Ovary (tissue), 10 donors: ENCODE measurements at regions of chr18 and their contacts with region 1.

Region 1: DNA sequence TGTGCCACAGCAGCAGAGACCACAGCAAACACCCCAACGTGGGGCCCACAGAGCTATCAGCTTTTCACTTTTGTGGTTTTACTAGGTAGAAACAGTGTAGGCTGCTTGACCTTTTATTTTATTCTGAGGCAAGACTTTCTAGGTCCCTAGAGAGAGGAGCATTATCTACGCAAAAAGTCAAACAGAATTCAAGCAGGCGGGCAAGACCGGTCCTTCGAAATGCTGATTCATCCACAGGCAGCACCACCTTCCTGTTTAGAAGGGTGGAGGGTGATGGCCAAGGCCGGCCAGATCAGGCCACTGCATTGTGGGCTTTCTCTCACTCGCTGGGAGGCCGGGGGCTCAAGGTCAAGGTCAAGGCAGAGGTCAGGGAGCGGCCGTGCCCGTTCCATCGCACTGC is 573.0 kb downstream of the GALR1 start:
- DNase-seq: no peak
- H3K4me3 ChIP-seq: no peak overlapping the region
- H3K27ac ChIP-seq: no peak overlapping the region
- H3K4me1 ChIP-seq: no peaks in the 10 kb centered on the region
- H3K27me3 ChIP-seq: no peaks in the 10 kb centered on the region
- CTCF ChIP-seq: no peak
- EP300 ChIP-seq: no peak
- POLR2A ChIP-seq: no peak

Region 2: GRCh38 chr18:77870199-77870598 is 47.6 kb after region 1 on chr18:
- intact Hi-C with region 1: loop called in 1 of 4 experiments (anchors 5 kb)
- DNase-seq: no peak
- H3K4me3 ChIP-seq: no peak overlapping the region
- H3K27ac ChIP-seq: no peak overlapping the region
- H3K4me1 ChIP-seq: no peaks in the 10 kb centered on the region
- H3K27me3 ChIP-seq: no peaks in the 10 kb centered on the region
- CTCF ChIP-seq: no peak
- EP300 ChIP-seq: no peak
- POLR2A ChIP-seq: no peak